ENCODE measurements at regions of chr14 and their contacts with region 1.

Region 1: DNA sequence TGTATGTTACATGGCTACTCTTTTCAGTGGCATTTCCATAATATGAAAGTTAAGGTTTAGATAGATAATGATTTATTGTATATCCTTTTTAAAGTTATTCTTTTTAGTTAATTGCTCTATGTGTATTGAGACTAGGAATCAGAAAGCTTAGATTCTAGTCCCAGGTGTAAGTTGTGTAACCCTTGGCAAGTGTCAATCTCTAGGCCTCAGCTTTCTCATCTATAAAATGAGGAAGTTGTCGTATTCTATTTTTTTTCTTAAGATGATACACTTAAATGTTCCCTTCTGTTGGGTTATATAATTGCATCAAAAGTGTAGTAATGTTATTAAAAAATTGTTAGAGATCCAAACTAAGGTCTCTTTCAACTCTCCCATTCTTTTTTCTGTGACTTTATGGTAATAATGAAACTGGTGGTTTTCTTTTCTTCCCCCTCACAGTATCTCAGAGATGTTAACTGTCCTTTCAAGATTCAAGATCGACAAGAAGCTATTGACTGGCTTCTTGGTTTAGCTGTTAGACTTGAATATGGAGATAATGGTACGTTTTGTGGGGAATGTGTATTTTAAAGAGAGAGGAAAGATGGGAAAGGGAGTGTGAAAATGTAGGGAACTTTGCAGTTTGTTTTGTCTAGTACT is 4.1 kb downstream of the RTRAF start:
- DNase-seq: no peak
- H3K4me3 ChIP-seq: no peak overlapping the region
- H3K27ac ChIP-seq: peak overlapping the region; percentile 47
- H3K4me1 ChIP-seq: peaks cover 83% of the 10 kb centered on the region
- H3K27me3 ChIP-seq: no peaks in the 10 kb centered on the region
- CTCF ChIP-seq: no peak

Region 2: DNA sequence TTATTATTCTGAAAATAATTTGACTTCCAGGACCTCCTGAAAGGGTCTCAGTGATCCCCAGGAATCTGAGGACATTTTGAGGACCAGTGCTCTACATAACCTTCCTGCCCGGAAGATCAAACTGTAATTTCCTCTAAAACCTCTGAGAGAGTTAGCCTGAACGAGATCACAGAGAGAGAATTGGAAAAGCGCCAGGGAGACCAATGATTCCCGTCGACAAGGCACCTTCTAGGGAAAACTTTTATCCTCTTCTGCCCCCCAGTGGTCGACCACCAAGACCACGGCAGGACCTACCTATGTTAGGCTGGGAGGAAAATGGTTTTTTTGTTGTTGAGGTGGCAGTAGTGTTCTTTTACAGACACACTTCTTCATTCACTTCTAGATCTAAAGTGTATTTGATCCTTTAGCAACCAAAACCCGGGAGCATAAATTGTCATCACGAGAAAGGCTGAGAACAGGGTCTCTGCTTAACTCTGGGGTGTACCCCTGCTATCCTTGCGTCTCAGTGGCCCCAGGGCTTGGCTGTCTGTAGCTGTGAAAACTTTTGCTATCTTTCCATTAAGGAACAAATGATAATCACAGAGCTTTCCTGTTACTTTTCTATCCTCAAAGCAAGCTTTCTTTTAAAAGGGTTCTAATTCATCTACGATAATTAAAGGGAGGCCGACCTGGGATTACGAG is 138.4 kb after region 1 on chr14:
- intact Hi-C with region 1: loop called (anchors 2 kb)
- DNase-seq: peak; percentile 65
- H3K4me3 ChIP-seq: no peak overlapping the region
- H3K27ac ChIP-seq: peak overlapping the region; percentile 31
- H3K4me1 ChIP-seq: peaks cover 18% of the 10 kb centered on the region
- H3K27me3 ChIP-seq: no peaks in the 10 kb centered on the region
- CTCF ChIP-seq: peak; percentile 83

Region 3: GRCh38 chr14:52146504-52146903 is 153.1 kb after region 1 on chr14:
- intact Hi-C with region 1: no loop called
- DNase-seq: no peak
- H3K4me3 ChIP-seq: no peak overlapping the region
- H3K27ac ChIP-seq: no peak overlapping the region
- H3K4me1 ChIP-seq: no peaks in the 10 kb centered on the region
- H3K27me3 ChIP-seq: no peaks in the 10 kb centered on the region
- CTCF ChIP-seq: no peak

Measured in left ventricle myocardium inferior (tissue), 1 donor.